PC-3 (cell line): ENCODE measurements at regions of chr4 and their contacts with region 1.

Region 1: GRCh38 chr4:163755013-163755412 is 260.5 kb downstream of the TMA16 start:
- DNase-seq: peak; percentile 51
- ATAC-seq: peak; percentile 55
- H3K4me3 ChIP-seq: no peak overlapping the region
- H3K27ac ChIP-seq: no peak overlapping the region
- H3K4me1 ChIP-seq: no peaks in the 10 kb centered on the region
- H3K27me3 ChIP-seq: no peaks in the 10 kb centered on the region
- CTCF ChIP-seq: peak; percentile 67

Region 2: DNA sequence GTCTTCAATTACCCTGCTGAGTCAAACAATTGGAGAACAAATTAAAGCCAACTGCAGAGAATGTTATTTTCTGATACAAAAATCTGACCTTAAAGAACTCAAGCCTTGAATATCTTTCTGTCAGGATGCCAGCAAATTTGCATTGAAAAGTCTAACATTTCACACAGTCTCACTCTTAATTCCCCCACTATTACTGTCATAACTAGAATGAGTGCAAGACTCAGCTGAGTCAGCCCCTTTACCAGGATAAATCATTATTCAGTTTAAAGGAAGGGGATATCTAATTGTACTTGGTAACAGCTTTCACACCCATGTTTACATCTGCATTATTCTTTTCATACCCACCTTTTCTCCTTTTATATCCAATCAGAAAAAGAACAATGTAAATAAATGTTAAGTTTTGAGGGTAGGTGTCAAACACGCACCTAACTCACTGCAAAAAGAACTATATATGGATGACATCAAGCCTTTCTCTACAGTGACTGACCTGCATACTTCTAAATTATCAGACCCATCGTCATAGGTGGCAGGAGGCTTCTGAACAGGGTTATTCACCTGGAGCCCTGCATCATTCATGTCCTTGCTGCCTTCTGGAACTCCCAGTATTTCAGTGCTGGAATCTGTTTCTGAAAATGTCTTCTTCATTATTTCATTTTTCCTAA is 143.1 kb before region 1 on chr4:
- CTCF ChIA-PET with region 1: no interaction called
- POLR2A ChIA-PET with region 1: no interaction called
- intact Hi-C with region 1: no loop called
- DNase-seq: no peak
- ATAC-seq: no peak
- H3K4me3 ChIP-seq: no peak overlapping the region
- H3K27ac ChIP-seq: no peak overlapping the region
- H3K4me1 ChIP-seq: no peaks in the 10 kb centered on the region
- H3K27me3 ChIP-seq: no peaks in the 10 kb centered on the region
- CTCF ChIP-seq: no peak

Region 3: GRCh38 chr4:163679189-163679588 is 75.8 kb before region 1 on chr4:
- CTCF ChIA-PET with region 1: no interaction called
- POLR2A ChIA-PET with region 1: no interaction called
- intact Hi-C with region 1: loop called (anchors 1 kb)
- DNase-seq: peak; percentile 55
- ATAC-seq: peak; percentile 80
- H3K4me3 ChIP-seq: no peak overlapping the region
- H3K27ac ChIP-seq: no peak overlapping the region
- H3K4me1 ChIP-seq: peaks cover 5% of the 10 kb centered on the region
- H3K27me3 ChIP-seq: no peaks in the 10 kb centered on the region
- CTCF ChIP-seq: peak; percentile 63

Region 4: DNA sequence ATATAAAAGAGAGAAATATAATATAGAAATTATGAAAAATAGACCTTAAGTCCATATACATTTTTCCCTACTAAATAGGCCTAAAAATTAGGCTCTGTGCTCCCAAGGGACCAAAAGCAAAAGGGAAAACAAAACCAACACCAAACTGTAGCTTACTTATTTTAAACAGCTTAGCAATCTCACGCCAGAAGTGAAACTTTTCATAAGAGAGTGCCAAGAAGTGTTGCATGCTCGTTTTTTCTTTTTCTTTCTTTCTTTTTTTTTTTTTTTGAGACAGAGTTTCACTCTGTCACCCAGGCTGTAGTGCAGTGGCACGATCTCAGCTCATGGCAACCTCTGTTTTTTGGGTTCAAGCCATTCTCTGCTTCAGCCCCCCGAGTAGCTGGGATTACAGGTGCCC is 10.2 kb before region 1 on chr4:
- CTCF ChIA-PET with region 1: no interaction called
- POLR2A ChIA-PET with region 1: no interaction called
- intact Hi-C with region 1: no loop called
- DNase-seq: no peak
- ATAC-seq: no peak
- H3K4me3 ChIP-seq: no peak overlapping the region
- H3K27ac ChIP-seq: no peak overlapping the region
- H3K4me1 ChIP-seq: no peaks in the 10 kb centered on the region
- H3K27me3 ChIP-seq: no peaks in the 10 kb centered on the region
- CTCF ChIP-seq: no peak

Region 5: DNA sequence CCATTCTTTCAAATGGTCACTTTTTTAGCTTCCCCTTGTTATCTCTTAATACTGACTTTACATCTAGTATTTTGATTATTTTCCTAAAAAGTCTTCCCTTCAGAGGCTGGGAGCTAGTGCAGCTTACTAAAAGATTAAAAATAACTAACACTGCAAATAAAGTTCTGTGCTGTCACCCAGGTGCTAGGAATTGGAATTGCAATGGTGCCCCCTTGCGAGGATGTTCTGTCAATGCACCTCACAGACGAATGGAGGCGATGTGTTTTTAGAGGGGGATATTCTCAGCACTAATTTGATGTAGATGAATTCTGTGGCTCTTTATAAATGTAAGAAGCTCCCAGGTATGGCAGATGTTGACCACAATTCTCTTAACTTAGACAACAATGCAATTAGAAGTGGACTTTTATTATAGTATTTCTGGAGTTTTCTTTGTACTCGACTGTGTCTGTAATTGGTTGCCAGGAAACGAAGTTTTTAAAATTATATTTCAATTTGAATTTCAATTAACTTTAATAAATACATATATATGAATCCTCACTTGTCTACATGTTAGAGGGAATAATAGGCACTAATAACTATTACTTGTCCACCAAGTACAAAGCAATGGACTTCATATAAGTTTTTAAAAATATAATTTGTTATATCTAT is 976.9 kb after region 1 on chr4:
- CTCF ChIA-PET with region 1: no interaction called
- POLR2A ChIA-PET with region 1: no interaction called
- intact Hi-C with region 1: loop called (anchors 5 kb)
- DNase-seq: peak; percentile 63
- ATAC-seq: peak; percentile 51; the same call in 1 of the 2 replicates
- H3K4me3 ChIP-seq: no peak overlapping the region
- H3K27ac ChIP-seq: no peak overlapping the region
- H3K4me1 ChIP-seq: no peaks in the 10 kb centered on the region
- H3K27me3 ChIP-seq: no peaks in the 10 kb centered on the region
- CTCF ChIP-seq: peak; percentile 86

Region 6: DNA sequence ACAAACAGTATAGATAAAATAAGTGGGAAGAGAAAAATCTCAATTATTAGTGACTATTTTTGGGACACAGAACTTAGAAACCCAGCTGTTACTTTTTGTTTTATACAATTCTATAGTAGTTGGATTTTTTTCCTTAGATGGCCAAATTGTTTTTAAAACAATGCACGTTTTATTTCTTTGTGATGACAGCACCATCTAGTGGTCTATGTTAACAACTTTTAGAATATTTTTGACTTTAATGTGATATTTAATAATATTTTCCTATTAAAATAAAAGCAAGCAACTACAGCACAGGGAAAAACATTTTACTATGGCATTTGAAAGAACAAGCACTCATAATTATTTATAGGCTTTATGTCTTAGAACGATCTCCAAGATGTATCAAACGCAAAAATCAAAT is 993.4 kb after region 1 on chr4:
- CTCF ChIA-PET with region 1: no interaction called
- POLR2A ChIA-PET with region 1: no interaction called
- intact Hi-C with region 1: loop called (anchors 5 kb)
- DNase-seq: peak; percentile 52
- ATAC-seq: no peak
- H3K4me3 ChIP-seq: no peak overlapping the region
- H3K27ac ChIP-seq: no peak overlapping the region
- H3K4me1 ChIP-seq: peaks cover 4% of the 10 kb centered on the region; the same call in 1 of the 2 replicates
- H3K27me3 ChIP-seq: no peaks in the 10 kb centered on the region
- CTCF ChIP-seq: peak; percentile 54